ENCODE measurements at regions of chr1 and their contacts with region 1.

Region 1: GRCh38 chr1:92013923-92014322 is 15.9 kb upstream of the EPHX4 start:
- DNase-seq: no peak
- H3K4me3 ChIP-seq: no peak overlapping the region
- H3K27ac ChIP-seq: no peak overlapping the region
- H3K4me1 ChIP-seq: no peaks in the 10 kb centered on the region
- H3K27me3 ChIP-seq: no peaks in the 10 kb centered on the region
- CTCF ChIP-seq: no peak

Region 2: DNA sequence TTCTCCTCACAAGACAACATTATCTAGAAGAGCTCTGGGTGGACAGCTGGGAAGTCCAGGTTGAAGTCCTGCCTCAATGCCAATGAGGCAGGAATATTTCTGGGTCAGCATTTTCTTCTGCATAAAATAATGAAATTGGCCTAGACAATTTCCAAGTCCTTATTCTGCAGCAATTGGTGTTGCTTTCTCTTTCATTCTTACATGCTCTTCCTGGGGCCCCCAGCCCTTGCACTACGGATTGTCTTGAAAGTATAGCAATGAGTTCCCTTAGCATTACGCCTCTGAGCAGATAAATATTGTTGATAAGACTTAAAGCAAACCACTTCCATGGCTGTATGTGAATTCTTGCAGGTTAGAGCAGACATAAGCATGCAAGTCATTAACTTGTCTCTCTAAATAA is 316.5 kb before region 1 on chr1:
- CTCF ChIA-PET with region 1: no interaction called
- POLR2A ChIA-PET with region 1: no interaction called
- intact Hi-C with region 1: no loop called
- DNase-seq: no peak
- H3K4me3 ChIP-seq: no peak overlapping the region
- H3K27ac ChIP-seq: no peak overlapping the region
- H3K4me1 ChIP-seq: peaks cover 22% of the 10 kb centered on the region
- H3K27me3 ChIP-seq: no peaks in the 10 kb centered on the region
- CTCF ChIP-seq: no peak

Region 3: GRCh38 chr1:92201973-92202372 is 188.1 kb after region 1 on chr1:
- CTCF ChIA-PET with region 1: no interaction called
- POLR2A ChIA-PET with region 1: interaction called, 12 read pairs
- intact Hi-C with region 1: no loop called
- DNase-seq: no peak
- H3K4me3 ChIP-seq: no peak overlapping the region
- H3K27ac ChIP-seq: no peak overlapping the region
- H3K4me1 ChIP-seq: no peaks in the 10 kb centered on the region
- H3K27me3 ChIP-seq: no peaks in the 10 kb centered on the region
- CTCF ChIP-seq: no peak

Region 4: GRCh38 chr1:92663775-92664174 is 649.9 kb after region 1 on chr1:
- CTCF ChIA-PET with region 1: no interaction called
- POLR2A ChIA-PET with region 1: interaction called, 18 read pairs
- intact Hi-C with region 1: no loop called
- DNase-seq: no peak
- H3K4me3 ChIP-seq: no peak overlapping the region
- H3K27ac ChIP-seq: no peak overlapping the region
- H3K4me1 ChIP-seq: no peaks in the 10 kb centered on the region
- H3K27me3 ChIP-seq: no peaks in the 10 kb centered on the region
- CTCF ChIP-seq: no peak

Measured in PC-9 (cell line).